Mammary epithelial cell (primary cell): ENCODE measurements at regions of chr3 and their contacts with region 1.

Region 1: DNA sequence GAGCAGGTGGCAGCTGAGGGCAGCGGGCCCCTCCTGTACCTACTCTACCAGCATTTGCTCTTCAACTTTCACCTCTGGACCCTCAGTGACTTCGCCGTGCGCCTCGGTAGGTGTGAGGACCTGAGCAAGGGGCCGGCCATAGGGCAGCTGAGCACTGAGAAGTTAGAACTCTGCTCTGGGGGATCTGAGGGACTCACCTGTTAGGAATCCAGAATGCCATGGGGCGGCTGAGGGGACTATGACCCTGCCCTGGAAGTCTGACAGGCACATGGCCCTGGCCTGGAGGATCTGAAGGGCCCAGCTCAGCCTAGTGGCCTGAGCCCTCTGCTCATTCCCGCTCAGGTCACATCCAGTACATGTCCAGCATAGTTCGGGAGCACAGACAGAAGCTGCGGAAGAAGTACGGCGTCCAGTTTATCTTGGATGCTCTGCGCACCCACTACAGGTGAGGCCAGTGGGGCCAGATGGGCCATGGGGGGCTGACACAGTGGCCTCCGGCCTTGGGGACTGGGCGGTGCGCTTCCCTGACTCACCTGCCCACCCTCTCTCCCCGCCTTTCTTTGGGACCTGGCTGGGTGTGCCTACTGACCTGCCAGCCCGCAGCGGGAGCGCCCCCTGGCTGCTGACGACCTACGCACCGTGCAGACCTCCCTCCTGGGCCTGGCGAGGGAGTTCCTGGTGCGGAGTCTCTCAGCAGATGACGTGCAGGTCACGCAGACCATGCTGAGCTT is 18.8 kb downstream of the NBEAL2 start:
- DNase-seq: peak; percentile 50
- H3K4me3 ChIP-seq: no peak overlapping the region
- H3K27ac ChIP-seq: no peak overlapping the region
- H3K4me1 ChIP-seq: peaks cover 18% of the 10 kb centered on the region
- H3K27me3 ChIP-seq: no peaks in the 10 kb centered on the region
- CTCF ChIP-seq: peak; percentile 86 to 93

Region 2: GRCh38 chr3:46675883-46676567 is 322.3 kb before region 1 on chr3:
- CTCF ChIA-PET with region 1: no interaction called
- dilution Hi-C with region 1: no loop called
- in situ Hi-C with region 1: no loop called
- intact Hi-C with region 1: no loop called
- DNase-seq: no peak
- H3K4me3 ChIP-seq: no peak overlapping the region
- H3K27ac ChIP-seq: no peak overlapping the region
- H3K4me1 ChIP-seq: no peaks in the 10 kb centered on the region
- H3K27me3 ChIP-seq: no peaks in the 10 kb centered on the region
- CTCF ChIP-seq: no peak

Region 3: DNA sequence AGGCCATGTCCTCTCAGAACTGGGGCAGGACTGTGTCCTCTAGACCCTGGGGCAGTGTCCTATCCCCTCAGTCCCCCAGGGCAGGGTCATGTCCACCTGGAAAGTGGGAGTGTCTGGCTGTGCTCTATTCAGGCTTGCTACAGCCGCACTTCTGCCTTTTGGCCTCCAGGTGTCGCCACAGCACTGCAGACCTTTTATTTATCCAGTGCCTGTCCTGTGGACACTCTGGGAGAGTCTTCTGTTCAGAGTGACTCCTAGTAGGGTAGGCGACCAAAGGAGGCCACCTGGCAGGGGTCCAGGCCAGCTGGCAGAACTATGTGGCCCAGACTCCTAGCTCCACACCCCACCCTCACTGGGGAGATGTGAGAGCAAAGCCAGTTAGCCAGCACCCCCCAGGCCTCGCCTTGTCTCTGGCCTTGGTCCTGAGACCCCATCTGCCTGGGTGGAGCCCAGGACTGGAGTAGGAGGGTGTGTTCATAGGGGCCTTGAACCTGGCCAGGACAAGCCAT is 293.2 kb before region 1 on chr3:
- CTCF ChIA-PET with region 1: no interaction called
- dilution Hi-C with region 1: no loop called
- in situ Hi-C with region 1: no loop called
- intact Hi-C with region 1: loop called (anchors 1 kb)
- DNase-seq: peak; percentile 57
- H3K4me3 ChIP-seq: no peak overlapping the region
- H3K27ac ChIP-seq: no peak overlapping the region
- H3K4me1 ChIP-seq: no peaks in the 10 kb centered on the region
- H3K27me3 ChIP-seq: peaks cover 10% of the 10 kb centered on the region
- CTCF ChIP-seq: peak; percentile 94 to 98

Region 4: GRCh38 chr3:46909535-46910442 is 88.5 kb before region 1 on chr3:
- CTCF ChIA-PET with region 1: no interaction called
- dilution Hi-C with region 1: no loop called
- in situ Hi-C with region 1: no loop called
- intact Hi-C with region 1: loop called (anchors 1 kb)
- DNase-seq: peak; percentile 65
- H3K4me3 ChIP-seq: no peak overlapping the region
- H3K27ac ChIP-seq: no peak overlapping the region
- H3K4me1 ChIP-seq: peaks cover 21% of the 10 kb centered on the region
- H3K27me3 ChIP-seq: no peaks in the 10 kb centered on the region
- CTCF ChIP-seq: peak; percentile 87 to 88

Region 5: GRCh38 chr3:46935168-46935858 is 63.0 kb before region 1 on chr3:
- CTCF ChIA-PET with region 1: no interaction called
- dilution Hi-C with region 1: loop called (anchors 10 kb)
- in situ Hi-C with region 1: no loop called
- intact Hi-C with region 1: loop called (anchors 1 kb)
- DNase-seq: peak; percentile 87
- H3K4me3 ChIP-seq: no peak overlapping the region
- H3K27ac ChIP-seq: peak overlapping the region; percentile 91
- H3K4me1 ChIP-seq: peaks cover 69% of the 10 kb centered on the region
- H3K27me3 ChIP-seq: no peaks in the 10 kb centered on the region
- CTCF ChIP-seq: peak; percentile 83 to 88

Region 6: DNA sequence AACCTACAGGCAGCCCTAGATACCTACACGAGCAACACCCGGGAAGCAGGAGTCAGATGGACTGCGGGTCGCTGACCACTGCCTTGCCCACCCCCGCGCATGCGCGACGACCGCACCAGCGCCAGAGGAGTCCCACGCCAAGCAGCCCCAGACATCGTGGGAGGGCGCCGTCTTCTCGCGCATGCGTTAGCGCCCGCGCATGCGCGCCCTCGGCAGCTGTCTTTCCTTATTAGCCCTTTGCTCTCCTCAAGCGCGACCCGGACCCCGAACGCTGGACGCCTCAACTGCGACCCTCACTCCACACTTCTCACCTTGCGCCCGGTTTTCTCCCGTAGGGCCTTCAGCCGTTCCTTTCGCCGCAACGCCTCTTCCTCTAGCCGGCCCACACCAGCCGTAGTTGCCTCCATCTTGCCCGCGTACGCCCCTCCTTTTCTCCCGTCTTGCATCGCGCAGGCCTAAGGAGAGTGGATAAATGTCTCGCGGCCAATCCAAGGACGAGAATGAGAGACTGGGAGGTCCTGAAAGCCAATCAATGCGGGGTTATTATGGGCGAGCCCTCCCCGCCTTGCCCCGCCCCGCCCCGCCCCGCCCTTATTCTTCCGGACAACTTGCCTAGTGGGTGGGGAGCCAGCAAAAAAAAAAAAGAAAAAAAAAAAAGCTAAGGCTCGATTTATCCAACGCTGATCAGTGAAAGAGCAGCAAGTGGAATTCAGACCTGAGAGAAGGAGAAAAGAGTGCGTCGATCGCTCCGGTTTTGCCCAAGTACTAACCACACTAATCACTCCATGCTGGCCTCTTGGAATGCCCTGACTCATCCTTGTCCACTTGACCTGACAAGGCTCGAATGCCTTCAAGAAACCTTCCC is 21.7 kb before region 1 on chr3 and contains the start of gene CCDC12:
- CTCF ChIA-PET with region 1: no interaction called
- dilution Hi-C with region 1: no loop called
- in situ Hi-C with region 1: no loop called
- intact Hi-C with region 1: loop called (anchors 2 kb)
- DNase-seq: peak; percentile 98
- H3K4me3 ChIP-seq: peak within 1 kb of the TSS; percentile 57 to 96 (median 81)
- H3K27ac ChIP-seq: peak within 1 kb of the TSS; percentile 94
- H3K4me1 ChIP-seq: peaks cover 43% of the 10 kb centered on the region
- H3K27me3 ChIP-seq: no peaks in the 10 kb centered on the region
- CTCF ChIP-seq: no peak
- total RNA-seq, gene CCDC12: 17.8 to 42.1 TPM